ENCODE measurements at regions of chr5 and their contacts with region 1.

Region 1: DNA sequence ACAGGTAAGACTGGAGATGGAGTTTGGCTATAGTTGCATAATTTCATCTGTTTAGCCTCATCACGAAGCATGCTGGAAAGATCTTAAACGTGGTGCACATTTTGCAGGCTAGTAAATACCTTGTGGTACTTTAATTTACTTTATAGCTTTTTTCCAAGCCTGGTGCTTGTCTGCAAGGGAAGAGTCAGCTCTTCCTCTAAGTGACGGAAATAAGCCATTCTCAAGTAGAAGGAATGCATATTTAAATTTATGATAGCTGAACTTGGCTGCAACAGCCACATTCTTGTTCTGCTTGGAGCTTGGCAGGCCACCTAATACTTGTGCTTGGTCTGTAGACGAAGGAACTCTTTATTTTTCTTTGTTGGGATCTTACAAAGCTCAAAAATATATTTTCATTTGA is 188.0 kb upstream of the PIK3R1 start:
- DNase-seq: peak in 1 of 2 donors; percentile 54
- ATAC-seq: peak; percentile 75
- H3K4me3 ChIP-seq: no peak overlapping the region
- H3K27ac ChIP-seq: peak overlapping the region in 1 of 2 donors; percentile 67
- H3K4me1 ChIP-seq: peaks cover 5 to 8% of the 10 kb centered on the region in 2 donors
- H3K27me3 ChIP-seq: no peaks in the 10 kb centered on the region

Region 2: GRCh38 chr5:67831048-67831447 is 196.5 kb before region 1 on chr5:
- intact Hi-C with region 1: no loop called
- DNase-seq: no peak
- ATAC-seq: no peak
- H3K4me3 ChIP-seq: no peak overlapping the region
- H3K27ac ChIP-seq: no peak overlapping the region
- H3K4me1 ChIP-seq: no peaks in the 10 kb centered on the region
- H3K27me3 ChIP-seq: no peaks in the 10 kb centered on the region

Region 3: DNA sequence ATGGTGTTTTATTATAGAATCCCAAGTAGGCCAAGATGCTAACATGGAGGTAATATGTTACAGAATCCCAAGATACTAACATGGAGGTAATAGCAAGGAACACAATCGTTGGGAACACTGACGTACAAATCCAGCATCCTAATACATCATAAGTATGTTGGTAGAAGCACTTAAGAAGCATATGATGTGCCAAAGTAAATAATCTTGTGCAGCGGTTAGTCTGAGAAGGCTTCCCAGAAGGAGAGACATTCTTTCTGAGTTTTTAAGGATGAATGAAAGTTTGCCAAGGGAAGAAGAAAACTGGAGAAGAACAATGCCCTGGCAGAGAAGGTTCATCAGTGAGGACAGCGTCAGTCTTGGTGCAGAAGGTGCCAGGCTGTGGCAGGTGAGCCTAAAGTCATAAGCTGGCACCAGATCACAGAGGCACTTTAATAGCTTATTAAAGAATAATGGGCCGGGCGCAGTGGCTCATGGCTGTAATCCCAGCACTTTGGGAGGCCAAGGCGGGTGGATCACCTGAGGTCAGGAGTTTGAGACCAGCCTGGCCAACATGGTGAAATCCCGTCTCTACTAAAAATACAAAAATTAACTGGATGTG is 106.4 kb before region 1 on chr5:
- intact Hi-C with region 1: no loop called
- DNase-seq: no peak
- ATAC-seq: no peak
- H3K4me3 ChIP-seq: no peak overlapping the region
- H3K27ac ChIP-seq: no peak overlapping the region
- H3K4me1 ChIP-seq: no peaks in the 10 kb centered on the region
- H3K27me3 ChIP-seq: no peaks in the 10 kb centered on the region

Region 4: GRCh38 chr5:67941614-67942401 is 85.7 kb before region 1 on chr5:
- intact Hi-C with region 1: loop called in 1 of 2 experiments (anchors 5 kb)
- DNase-seq: no peak
- ATAC-seq: peak; percentile 56
- H3K4me3 ChIP-seq: no peak overlapping the region
- H3K27ac ChIP-seq: no peak overlapping the region
- H3K4me1 ChIP-seq: peaks cover 7 to 10% of the 10 kb centered on the region in 2 donors
- H3K27me3 ChIP-seq: no peaks in the 10 kb centered on the region

Region 5: DNA sequence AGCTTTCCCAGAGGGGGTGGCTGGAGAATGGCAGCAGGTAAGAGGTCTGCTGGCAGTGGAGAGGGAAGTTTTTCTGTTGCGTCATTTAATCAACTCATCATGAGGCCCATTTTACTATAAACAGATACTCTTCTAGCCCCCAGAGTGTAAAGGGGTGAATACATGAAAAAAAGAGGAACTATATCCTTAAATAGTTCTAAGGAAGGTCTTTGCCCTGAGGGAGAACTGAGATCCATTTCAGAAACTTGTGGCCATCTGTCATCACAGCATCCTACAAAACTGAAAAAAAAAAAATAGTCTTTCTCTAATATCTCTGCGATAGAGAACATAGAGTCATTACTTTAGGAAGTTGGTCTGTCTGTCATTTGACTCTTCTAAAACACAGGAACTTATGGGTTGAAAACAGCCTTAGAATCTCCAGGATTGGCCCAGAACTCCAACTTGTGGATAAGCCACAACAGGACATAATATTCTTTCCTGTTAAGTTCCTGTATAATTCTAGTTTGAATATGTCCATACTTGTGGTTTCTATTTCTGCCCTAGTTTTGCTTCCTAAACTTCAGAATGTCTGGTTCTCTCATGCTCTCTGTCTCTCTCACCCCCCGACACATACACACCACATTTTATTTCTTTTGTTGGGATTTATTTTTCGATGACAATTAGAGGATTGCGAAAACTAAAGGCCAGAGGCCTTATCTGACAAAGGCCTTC is 50.5 kb before region 1 on chr5:
- intact Hi-C with region 1: no loop called
- DNase-seq: no peak
- ATAC-seq: no peak
- H3K4me3 ChIP-seq: no peak overlapping the region
- H3K27ac ChIP-seq: no peak overlapping the region
- H3K4me1 ChIP-seq: peaks cover 0 to 1% of the 10 kb centered on the region in 2 donors
- H3K27me3 ChIP-seq: no peaks in the 10 kb centered on the region

Measured in aorta (tissue), 5 donors.